ENCODE measurements at regions of chr1 and their contacts with region 1.

Region 1: DNA sequence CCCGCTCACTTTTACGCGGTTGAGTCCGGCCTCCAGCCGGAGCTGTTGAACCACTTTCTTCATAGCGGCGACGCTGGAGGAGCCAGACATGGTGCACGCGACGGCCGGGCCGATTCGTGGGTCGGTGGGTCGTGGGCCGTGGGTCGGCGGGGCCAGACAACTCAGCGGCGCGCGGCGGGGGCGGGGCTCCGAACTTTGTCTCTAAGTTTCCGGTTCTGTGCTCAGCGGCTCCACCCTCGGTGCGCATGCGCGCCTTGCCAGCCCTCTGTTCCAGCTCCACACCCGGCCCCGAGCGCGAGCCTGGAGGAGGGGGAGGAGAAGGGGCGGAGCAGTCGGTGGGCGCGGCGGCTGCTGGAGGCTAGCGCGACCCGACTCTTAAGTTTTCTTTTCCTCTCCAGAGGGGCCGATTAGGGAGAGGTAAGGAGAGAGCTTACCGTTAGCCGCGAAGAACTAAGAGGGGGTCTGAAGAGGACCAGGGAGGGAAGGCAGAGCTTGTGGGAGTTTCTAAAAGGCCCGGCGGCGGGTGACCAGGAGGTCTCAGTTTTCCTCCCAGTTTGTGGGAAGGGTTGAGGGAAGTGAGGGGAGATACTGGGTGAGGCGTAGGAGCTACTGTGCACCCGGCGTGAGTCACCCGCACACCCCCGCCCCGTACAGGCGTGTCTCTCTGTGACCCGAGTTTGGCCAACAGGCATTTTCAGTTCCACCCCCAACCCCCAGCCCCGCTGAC is at the starts of genes GNG5 and SPATA1:
- DNase-seq: peak; percentile 99
- ATAC-seq: peak; percentile 96 to 97 (median 96)
- H3K4me3 ChIP-seq: peak within 1 kb of the TSS; percentile 76
- H3K27ac ChIP-seq: peak within 1 kb of the TSS; percentile 97
- H3K4me1 ChIP-seq: peaks cover 36% of the 10 kb centered on the region
- H3K27me3 ChIP-seq: no peaks in the 10 kb centered on the region
- CTCF ChIP-seq: no peak
- total RNA-seq, gene GNG5: 112 to 163 (median 141) TPM
- total RNA-seq, gene SPATA1: 0.92 to 1.4 (median 0.93) TPM in 3 of 4 donors, not detected in the other

Region 2: DNA sequence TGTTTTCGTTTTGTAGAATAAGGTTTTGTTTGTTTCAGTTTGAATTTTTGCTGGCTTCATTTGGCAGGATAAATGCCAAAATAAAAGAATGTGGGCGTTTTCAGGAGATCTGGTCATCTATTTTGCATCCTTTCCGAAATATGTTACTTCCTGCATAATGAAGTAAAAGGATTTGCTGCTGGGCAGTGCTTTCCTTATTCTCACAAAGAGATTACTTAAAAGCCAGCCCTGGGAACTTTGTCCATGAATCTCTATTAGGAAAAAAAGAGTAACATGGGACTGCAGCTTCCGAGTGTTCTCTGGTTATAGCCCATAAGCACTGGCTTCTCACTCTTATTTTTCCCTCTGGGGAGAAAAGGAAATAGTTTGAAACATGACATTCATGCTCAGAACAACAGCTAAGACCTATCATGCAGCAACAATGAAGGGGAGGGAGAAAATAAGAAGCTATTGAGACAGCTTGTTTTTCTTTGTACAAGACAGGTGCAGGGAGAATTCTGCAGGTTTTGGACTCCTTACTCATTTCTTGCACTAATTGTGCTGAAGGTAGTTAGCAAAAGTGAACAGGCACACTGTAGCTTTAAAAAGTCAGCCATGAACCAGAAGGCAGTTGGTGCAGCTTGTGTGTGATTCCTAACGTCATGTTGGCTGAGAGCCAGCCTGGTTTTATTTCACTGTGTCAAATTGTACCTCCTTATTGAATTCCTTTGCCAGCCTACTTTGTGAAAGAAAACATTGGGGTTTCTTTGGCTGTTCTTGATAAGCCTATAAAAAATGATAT is 205.0 kb before region 1 on chr1 and contains the start of gene SAMD13:
- intact Hi-C with region 1: loop called in 1 of 2 experiments (anchors 5 kb)
- DNase-seq: peak; percentile 50 to 65
- ATAC-seq: peak; percentile 48 to 66 (median 58)
- H3K4me3 ChIP-seq: peak within 1 kb of the TSS; percentile 96
- H3K27ac ChIP-seq: peak within 1 kb of the TSS; percentile 95
- H3K4me1 ChIP-seq: peaks cover 31% of the 10 kb centered on the region
- H3K27me3 ChIP-seq: no peaks in the 10 kb centered on the region
- CTCF ChIP-seq: no peak
- total RNA-seq, gene SAMD13: 0.65 to 3.2 (median 1.3) TPM

Region 3: GRCh38 chr1:84478876-84479868 is 27.0 kb before region 1 on chr1 and contains the start of gene RPF1:
- intact Hi-C with region 1: loop called in 1 of 2 experiments (anchors 2 kb)
- DNase-seq: peak; percentile 68 to 84
- ATAC-seq: peak; percentile 93 to 99 (median 94)
- H3K4me3 ChIP-seq: peak within 1 kb of the TSS; percentile 83
- H3K27ac ChIP-seq: peak within 1 kb of the TSS; percentile 92
- H3K4me1 ChIP-seq: peaks cover 27% of the 10 kb centered on the region
- H3K27me3 ChIP-seq: peaks cover 0 to 26% (median 2%) of the 10 kb centered on the region in 3 donors
- CTCF ChIP-seq: no peak
- total RNA-seq, gene RPF1: 29.2 to 38.5 (median 32.0) TPM

Region 4: GRCh38 chr1:84573967-84574842 is 68.0 kb after region 1 on chr1 and contains the start of gene CTBS:
- intact Hi-C with region 1: loop called (anchors 2 to 5 kb)
- DNase-seq: peak; percentile 90 to 96
- ATAC-seq: peak; percentile 98 to 99 (median 99)
- H3K4me3 ChIP-seq: peak within 1 kb of the TSS; percentile 90
- H3K27ac ChIP-seq: peak within 1 kb of the TSS; percentile 96
- H3K4me1 ChIP-seq: peaks cover 9% of the 10 kb centered on the region
- H3K27me3 ChIP-seq: no peaks in the 10 kb centered on the region
- CTCF ChIP-seq: no peak
- total RNA-seq, gene CTBS: 4.4 to 5.2 (median 4.9) TPM

Region 5: GRCh38 chr1:84603941-84604830 is 98.0 kb after region 1 on chr1:
- intact Hi-C with region 1: loop called in 1 of 2 experiments (anchors 10 kb)
- DNase-seq: peak in 1 of 2 donors; percentile 53
- ATAC-seq: peak; percentile 86 to 98 (median 91)
- H3K4me3 ChIP-seq: peak overlapping the region; percentile 47
- H3K27ac ChIP-seq: peak overlapping the region; percentile 49
- H3K4me1 ChIP-seq: peaks cover 10% of the 10 kb centered on the region
- H3K27me3 ChIP-seq: no peaks in the 10 kb centered on the region
- CTCF ChIP-seq: peak; percentile 63

Region 6: GRCh38 chr1:84620720-84621313 is 114.7 kb after region 1 on chr1:
- intact Hi-C with region 1: loop called in 1 of 2 experiments (anchors 2 kb)
- DNase-seq: peak; percentile 74 to 87
- ATAC-seq: peak; percentile 92 to 98 (median 95)
- H3K4me3 ChIP-seq: peak overlapping the region; percentile 74
- H3K27ac ChIP-seq: no peak overlapping the region
- H3K4me1 ChIP-seq: no peaks in the 10 kb centered on the region
- H3K27me3 ChIP-seq: no peaks in the 10 kb centered on the region
- CTCF ChIP-seq: peak; percentile 95

Region 7: DNA sequence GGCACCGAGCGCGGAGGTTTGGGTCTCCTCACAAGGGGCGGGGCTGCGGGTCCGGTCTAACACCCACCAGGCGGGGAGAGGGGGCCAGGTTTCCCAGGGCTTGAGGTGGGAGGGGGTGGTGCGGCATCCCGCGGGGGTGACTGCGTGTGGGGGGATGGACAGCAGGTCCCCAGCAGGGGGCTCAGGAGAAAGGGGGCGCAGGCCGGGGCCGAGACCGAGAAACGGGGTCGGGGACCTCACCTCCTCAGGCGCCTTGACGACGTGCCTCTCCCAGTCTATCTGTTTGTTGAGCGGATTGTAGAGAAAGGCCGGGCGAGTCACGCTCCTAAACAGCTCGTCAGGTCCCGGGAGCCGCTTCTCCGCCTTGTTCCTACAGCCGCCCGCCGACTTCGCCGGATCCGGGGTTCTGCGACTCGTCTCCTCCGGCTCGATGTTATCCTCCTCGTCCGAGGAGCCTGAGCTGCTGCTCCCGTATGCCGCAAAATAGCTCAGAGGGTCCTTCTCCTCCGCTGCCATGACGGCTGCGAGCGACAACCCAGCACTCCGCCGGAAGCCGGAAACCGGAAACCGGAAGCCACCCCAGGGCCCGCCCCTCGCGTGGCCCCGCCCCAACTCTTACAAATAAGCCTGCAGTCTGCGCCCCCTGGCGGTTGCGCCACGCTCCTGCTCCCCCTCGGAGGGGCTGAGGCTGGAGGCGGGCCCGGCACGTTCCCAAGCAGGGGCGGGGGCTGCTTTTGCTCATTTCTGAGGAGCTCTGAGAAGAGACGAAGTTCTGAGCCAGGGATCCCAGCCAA is 753.1 kb after region 1 on chr1 and contains the start of gene C1orf52:
- intact Hi-C with region 1: loop called in 1 of 2 experiments (anchors 10 kb)
- DNase-seq: peak; percentile 96 to 98
- ATAC-seq: peak; percentile 98 to 100 (median 99)
- H3K4me3 ChIP-seq: peak within 1 kb of the TSS; percentile 95
- H3K27ac ChIP-seq: peak within 1 kb of the TSS; percentile 93
- H3K4me1 ChIP-seq: peaks cover 23% of the 10 kb centered on the region
- H3K27me3 ChIP-seq: no peaks in the 10 kb centered on the region
- CTCF ChIP-seq: peak; percentile 99
- total RNA-seq, gene C1orf52: 10.2 to 20.7 (median 13.1) TPM